ENCODE measurements at regions of chr15 and their contacts with region 1.

Region 1: DNA sequence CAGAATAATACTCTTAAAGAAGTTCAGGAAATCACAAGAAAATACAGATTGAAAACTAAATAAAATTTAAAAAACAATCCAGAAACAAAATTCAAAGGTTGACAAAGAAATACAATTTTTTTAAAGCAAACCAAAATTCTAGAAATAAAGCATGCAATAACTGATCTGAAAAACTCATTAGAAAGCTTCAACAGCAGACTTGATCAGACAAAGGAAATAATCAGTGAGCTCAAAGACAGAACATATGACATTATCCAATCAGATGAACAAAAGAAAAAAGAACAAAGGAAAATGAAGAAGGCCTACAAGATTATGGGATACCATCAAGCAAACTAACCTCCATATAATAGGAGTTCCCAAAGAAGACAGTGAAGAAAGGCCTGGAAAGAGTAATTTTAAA is 336.8 kb downstream of the RSL24D1 start:
- DNase-seq: no peak
- ATAC-seq: no peak
- H3K4me3 ChIP-seq: no peak overlapping the region
- H3K27ac ChIP-seq: no peak overlapping the region
- H3K4me1 ChIP-seq: no peaks in the 10 kb centered on the region
- H3K27me3 ChIP-seq: no peaks in the 10 kb centered on the region
- CTCF ChIP-seq: no peak
- POLR2A ChIP-seq: no peak
- RAD21 ChIP-seq: no peak

Region 2: DNA sequence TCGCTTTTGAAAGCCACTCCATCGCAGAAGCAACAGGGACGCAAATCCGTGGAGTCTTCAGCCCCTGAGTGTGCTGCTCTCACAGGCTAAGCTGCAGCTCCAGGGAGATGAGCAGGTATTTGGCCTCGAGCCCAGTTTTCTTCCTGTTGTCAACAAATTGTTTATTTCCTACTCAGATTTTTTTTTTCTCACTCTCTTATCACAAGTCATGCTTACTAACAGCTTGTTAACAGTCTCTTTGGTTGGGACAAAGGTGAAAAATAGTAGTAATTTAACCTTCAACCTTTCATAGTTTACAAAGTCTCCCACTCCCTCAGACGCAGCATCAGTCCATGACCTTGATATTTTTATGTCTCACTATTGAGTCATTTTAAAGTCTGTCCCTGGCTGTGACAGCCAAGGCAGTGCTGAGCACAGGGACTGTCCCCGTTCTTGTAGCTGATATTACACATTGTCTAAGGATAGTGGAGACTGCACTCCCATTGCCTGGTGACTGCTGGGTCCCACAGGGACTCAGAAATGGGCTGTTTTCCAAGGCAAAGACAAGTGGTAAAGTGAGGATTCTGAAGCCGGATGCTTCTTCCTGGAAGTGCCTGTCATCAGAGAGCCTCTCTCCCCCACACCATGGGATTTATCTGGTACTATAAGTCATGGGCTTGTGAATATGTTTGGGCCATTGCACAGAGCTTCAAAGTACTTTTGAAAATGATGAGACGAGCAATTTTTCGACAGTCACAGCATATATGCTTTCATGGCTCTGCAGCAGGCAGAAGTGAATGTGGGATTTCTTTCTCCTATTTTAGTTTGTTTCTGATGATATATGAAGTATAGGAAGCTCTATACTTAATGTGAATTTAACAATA is 941.6 kb before region 1 on chr15:
- CTCF ChIA-PET with region 1: no interaction called
- POLR2A ChIA-PET with region 1: no interaction called
- dilution Hi-C with region 1: no loop called
- in situ Hi-C with region 1: no loop called
- intact Hi-C with region 1: loop called (anchors 10 kb)
- DNase-seq: no peak
- ATAC-seq: no peak
- H3K4me3 ChIP-seq: no peak overlapping the region
- H3K27ac ChIP-seq: no peak overlapping the region
- H3K4me1 ChIP-seq: no peaks in the 10 kb centered on the region
- H3K27me3 ChIP-seq: no peaks in the 10 kb centered on the region
- CTCF ChIP-seq: no peak
- POLR2A ChIP-seq: no peak
- RAD21 ChIP-seq: no peak

Region 3: DNA sequence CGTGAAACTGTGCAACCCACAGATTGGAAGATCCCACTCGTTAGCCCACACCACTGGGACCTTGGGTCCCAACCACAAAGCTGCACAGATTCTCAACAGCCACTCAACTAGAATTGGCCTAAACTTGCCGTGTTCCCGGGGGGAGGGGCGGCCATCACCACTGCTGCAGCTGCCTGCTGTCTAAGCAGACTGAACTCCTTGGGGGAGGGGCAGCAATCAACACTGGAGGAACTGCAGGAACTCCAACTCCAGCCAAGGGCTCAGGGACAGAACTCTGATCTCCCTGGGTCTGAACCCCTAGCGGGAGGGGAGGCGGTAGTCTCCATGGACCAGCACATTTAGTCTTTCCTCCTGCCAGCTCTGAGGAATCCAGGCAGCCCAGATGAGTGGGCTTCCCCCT is 130.8 kb after region 1 on chr15:
- CTCF ChIA-PET with region 1: no interaction called
- POLR2A ChIA-PET with region 1: no interaction called
- dilution Hi-C with region 1: no loop called
- in situ Hi-C with region 1: no loop called
- intact Hi-C with region 1: no loop called
- DNase-seq: no peak
- ATAC-seq: no peak
- H3K4me3 ChIP-seq: no peak overlapping the region
- H3K27ac ChIP-seq: no peak overlapping the region
- H3K4me1 ChIP-seq: no peaks in the 10 kb centered on the region
- H3K27me3 ChIP-seq: no peaks in the 10 kb centered on the region
- CTCF ChIP-seq: no peak
- POLR2A ChIP-seq: no peak
- RAD21 ChIP-seq: no peak

Region 4: GRCh38 chr15:55124616-55125015 is 264.6 kb after region 1 on chr15:
- CTCF ChIA-PET with region 1: no interaction called
- POLR2A ChIA-PET with region 1: no interaction called
- dilution Hi-C with region 1: no loop called
- in situ Hi-C with region 1: no loop called
- intact Hi-C with region 1: no loop called
- DNase-seq: no peak
- ATAC-seq: no peak
- H3K4me3 ChIP-seq: no peak overlapping the region
- H3K27ac ChIP-seq: no peak overlapping the region
- H3K4me1 ChIP-seq: no peaks in the 10 kb centered on the region
- H3K27me3 ChIP-seq: no peaks in the 10 kb centered on the region
- CTCF ChIP-seq: no peak
- POLR2A ChIP-seq: no peak
- RAD21 ChIP-seq: no peak